ENCODE measurements at regions of chr2 and their contacts with region 1.

Region 1: GRCh38 chr2:27663463-27664249 is at the starts of genes SLC4A1AP and SUPT7L:
- DNase-seq: peak; percentile 59 to 87
- ATAC-seq: peak; percentile 81 to 91 (median 84)
- H3K4me3 ChIP-seq: peak within 1 kb of the TSS; percentile 97
- H3K27ac ChIP-seq: peak within 1 kb of the TSS; percentile 89
- H3K4me1 ChIP-seq: peaks cover 34% of the 10 kb centered on the region
- H3K27me3 ChIP-seq: no peaks in the 10 kb centered on the region
- CTCF ChIP-seq: no peak
- total RNA-seq, gene SLC4A1AP: 21.1 to 28.4 (median 26.0) TPM
- total RNA-seq, gene SUPT7L: 17.1 to 25.0 (median 22.1) TPM

Region 2: DNA sequence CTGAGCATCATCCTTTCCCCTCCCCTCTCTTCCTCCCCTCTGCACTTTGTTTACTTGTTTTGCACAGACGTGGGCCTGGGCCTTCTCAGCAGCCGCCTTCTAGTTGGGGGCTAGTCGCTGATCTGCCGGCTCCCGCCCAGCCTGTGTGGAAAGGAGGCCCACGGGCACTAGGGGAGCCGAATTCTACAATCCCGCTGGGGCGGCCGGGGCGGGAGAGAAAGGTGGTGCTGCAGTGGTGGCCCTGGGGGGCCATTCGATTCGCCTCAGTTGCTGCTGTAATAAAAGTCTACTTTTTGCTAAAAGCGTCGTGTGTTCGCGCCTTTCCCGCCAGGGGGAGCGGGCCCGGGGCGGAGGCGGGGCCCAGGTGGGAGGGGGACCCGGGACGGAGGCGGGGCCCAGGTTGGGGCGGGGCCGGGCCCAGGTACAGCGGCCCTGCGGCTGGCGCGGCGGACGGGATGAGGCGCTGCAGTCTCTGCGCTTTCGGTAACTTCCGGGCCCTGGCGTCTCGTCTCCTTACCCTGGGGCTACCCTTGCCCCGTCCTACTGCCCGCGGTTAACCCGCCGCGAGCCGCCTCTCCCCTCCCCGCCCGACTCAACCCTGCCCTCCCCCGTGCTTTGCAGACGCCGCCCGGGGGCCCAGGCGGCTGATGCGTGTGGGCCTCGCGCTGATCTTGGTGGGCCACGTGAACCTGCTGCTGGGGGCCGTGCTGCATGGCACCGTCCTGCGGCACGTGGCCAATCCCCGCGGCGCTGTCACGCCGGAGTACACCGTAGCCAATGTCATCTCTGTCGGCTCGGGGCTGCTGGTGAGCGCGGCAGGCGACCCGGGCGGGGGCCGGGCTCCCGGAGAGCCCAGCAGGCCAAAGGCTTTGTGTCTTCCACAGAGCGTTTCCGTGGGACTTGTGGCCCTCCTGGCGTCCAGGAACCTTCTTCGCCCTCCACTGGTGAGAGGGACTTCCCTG is 221.4 kb before region 1 on chr2 and contains the start of gene KRTCAP3:
- intact Hi-C with region 1: no loop called
- DNase-seq: peak; percentile 21 to 57
- ATAC-seq: peak; percentile 47 to 69 (median 54)
- H3K4me3 ChIP-seq: peak within 1 kb of the TSS; percentile 11
- H3K27ac ChIP-seq: peak within 1 kb of the TSS; percentile 77
- H3K4me1 ChIP-seq: peaks cover 15% of the 10 kb centered on the region
- H3K27me3 ChIP-seq: no peaks in the 10 kb centered on the region
- CTCF ChIP-seq: no peak
- total RNA-seq, gene KRTCAP3: 1.5 to 2.2 (median 1.7) TPM in 3 of 4 donors, not detected in the other

Region 3: GRCh38 chr2:27628767-27629709 is 34.6 kb before region 1 on chr2 and contains the starts of genes CCDC121 and GPN1:
- intact Hi-C with region 1: loop called in 1 of 2 experiments (anchors 5 kb)
- DNase-seq: peak; percentile 91 to 93
- ATAC-seq: peak; percentile 95 to 98 (median 96)
- H3K4me3 ChIP-seq: peak within 1 kb of the TSS; percentile 79
- H3K27ac ChIP-seq: peak within 1 kb of the TSS; percentile 76
- H3K4me1 ChIP-seq: peaks cover 9% of the 10 kb centered on the region
- H3K27me3 ChIP-seq: no peaks in the 10 kb centered on the region
- CTCF ChIP-seq: no peak
- total RNA-seq, gene CCDC121: 0.98 to 4.8 (median 2.6) TPM
- total RNA-seq, gene GPN1: 24.2 to 28.5 (median 26.2) TPM